Ovary (tissue), 10 donors: ENCODE measurements at regions of chr12 and their contacts with region 1.

Region 1: DNA sequence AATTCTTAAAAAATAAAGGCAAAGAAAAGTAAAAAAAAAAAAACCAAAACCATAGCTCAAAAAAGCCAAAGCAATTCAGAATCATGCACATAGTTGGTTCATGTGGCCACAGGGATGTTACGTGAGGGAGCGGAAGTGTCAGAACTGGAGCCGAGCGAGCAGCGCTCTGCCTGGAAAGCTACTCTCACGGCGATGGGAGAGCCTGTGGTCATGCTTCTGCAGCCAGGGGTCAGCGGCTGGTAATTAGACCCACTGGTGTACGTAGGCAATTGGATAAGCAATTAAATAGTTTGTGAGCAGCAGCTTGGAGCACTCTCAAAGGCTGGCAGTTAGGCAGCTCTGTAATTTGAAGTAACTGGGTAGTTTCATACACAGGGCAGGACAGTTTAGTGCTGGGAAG is 58.1 kb downstream of the TRHDE start:
- DNase-seq: peak in 4 of 5 donors; percentile 11 to 51 (median 30)
- H3K4me3 ChIP-seq: no peak overlapping the region
- H3K27ac ChIP-seq: no peak overlapping the region
- H3K4me1 ChIP-seq: no peaks in the 10 kb centered on the region
- H3K27me3 ChIP-seq: no peaks in the 10 kb centered on the region
- CTCF ChIP-seq: no peak
- EP300 ChIP-seq: no peak
- POLR2A ChIP-seq: no peak

Region 2: GRCh38 chr12:72282721-72283120 is 47.6 kb before region 1 on chr12:
- intact Hi-C with region 1: no loop called
- DNase-seq: no peak
- H3K4me3 ChIP-seq: no peak overlapping the region
- H3K27ac ChIP-seq: no peak overlapping the region
- H3K4me1 ChIP-seq: peaks cover 2% of the 10 kb centered on the region
- H3K27me3 ChIP-seq: no peaks in the 10 kb centered on the region
- CTCF ChIP-seq: no peak
- EP300 ChIP-seq: no peak
- POLR2A ChIP-seq: no peak

Region 3: DNA sequence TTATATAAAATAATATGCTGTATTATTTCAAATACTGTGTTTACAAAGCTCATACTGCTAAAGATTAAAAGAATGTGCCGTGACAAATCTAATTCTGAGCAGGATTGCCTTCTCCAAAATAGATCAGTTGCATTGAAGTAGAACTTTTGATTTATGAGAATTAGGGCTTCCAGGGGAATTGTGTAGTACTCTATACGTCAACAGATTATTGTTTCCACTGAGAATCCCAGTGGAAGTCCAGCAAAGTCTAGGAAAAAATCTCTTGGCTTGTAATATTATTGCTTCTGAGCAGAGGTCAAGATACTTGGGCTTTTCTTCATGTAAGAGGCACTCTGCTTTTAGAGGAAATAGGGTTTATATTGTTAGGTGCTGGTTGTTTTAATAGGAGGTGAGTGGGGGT is 75.8 kb after region 1 on chr12:
- intact Hi-C with region 1: loop called in 1 of 4 experiments (anchors 5 kb)
- DNase-seq: no peak
- H3K4me3 ChIP-seq: no peak overlapping the region
- H3K27ac ChIP-seq: no peak overlapping the region
- H3K4me1 ChIP-seq: no peaks in the 10 kb centered on the region
- H3K27me3 ChIP-seq: no peaks in the 10 kb centered on the region
- CTCF ChIP-seq: no peak
- EP300 ChIP-seq: no peak
- POLR2A ChIP-seq: no peak